Tibial artery (tissue), 4 donors: ENCODE measurements at regions of chr1 and their contacts with region 1.

Region 1: GRCh38 chr1:171226747-171227370 is 21.4 kb upstream of the FMO1 start:
- DNase-seq: no peak
- H3K4me3 ChIP-seq: no peak overlapping the region
- H3K27ac ChIP-seq: no peak overlapping the region
- H3K4me1 ChIP-seq: peaks cover 0 to 35% (median 20%) of the 10 kb centered on the region in 4 donors
- H3K27me3 ChIP-seq: no peaks in the 10 kb centered on the region
- CTCF ChIP-seq: peak; percentile 84 to 89

Region 2: DNA sequence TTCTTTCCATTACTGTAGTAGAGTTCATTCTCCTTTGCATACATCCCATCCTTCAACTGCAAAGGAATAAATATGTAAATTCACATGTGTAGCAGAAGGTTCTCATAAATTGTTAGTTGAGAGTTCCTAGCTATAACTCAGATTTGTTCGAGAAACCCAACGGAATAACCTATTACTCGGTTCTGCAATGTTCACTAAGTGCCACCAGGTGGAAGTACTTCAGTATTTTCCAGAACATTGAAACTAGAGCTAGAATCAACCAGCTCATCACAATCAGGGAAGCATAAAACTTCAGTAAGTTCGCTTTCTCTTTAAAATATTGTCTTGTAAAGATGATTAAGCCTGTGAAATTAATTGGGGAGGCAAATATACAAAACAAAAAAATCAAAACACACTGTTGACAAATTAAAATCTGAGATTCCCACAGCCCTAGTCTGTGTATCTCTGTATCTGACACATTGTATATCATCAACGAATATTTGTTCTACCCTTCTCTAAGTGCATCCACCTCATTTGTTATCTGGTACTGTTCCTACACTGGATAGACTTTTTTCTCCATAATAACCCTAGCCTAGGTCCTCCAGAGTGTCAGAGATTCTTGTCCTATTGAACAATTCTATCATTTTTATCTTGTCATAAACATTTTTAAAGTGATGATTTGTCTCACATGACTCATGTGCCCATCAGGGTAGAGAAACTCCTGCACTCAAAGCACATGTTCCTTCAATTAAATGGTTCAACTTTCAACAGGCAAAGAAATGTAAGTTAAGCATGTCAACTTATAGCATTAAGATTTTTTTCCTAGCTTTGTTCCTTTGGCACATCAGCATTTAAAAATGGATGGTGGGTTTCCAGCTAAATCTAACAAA is 259.6 kb before region 1 on chr1:
- intact Hi-C with region 1: loop called (anchors 5 kb)
- DNase-seq: no peak
- H3K4me3 ChIP-seq: no peak overlapping the region
- H3K27ac ChIP-seq: no peak overlapping the region
- H3K4me1 ChIP-seq: peaks cover 0 to 10% (median 1%) of the 10 kb centered on the region in 4 donors
- H3K27me3 ChIP-seq: no peaks in the 10 kb centered on the region
- CTCF ChIP-seq: peak; percentile 73 to 82

Region 3: GRCh38 chr1:171081314-171081753 is 145.5 kb before region 1 on chr1:
- intact Hi-C with region 1: loop called (anchors 5 kb)
- DNase-seq: no peak
- H3K4me3 ChIP-seq: no peak overlapping the region
- H3K27ac ChIP-seq: peak overlapping the region; percentile 61 to 68
- H3K4me1 ChIP-seq: peaks cover 0 to 16% (median 8%) of the 10 kb centered on the region in 4 donors
- H3K27me3 ChIP-seq: no peaks in the 10 kb centered on the region
- CTCF ChIP-seq: peak; percentile 47 to 67

Region 4: DNA sequence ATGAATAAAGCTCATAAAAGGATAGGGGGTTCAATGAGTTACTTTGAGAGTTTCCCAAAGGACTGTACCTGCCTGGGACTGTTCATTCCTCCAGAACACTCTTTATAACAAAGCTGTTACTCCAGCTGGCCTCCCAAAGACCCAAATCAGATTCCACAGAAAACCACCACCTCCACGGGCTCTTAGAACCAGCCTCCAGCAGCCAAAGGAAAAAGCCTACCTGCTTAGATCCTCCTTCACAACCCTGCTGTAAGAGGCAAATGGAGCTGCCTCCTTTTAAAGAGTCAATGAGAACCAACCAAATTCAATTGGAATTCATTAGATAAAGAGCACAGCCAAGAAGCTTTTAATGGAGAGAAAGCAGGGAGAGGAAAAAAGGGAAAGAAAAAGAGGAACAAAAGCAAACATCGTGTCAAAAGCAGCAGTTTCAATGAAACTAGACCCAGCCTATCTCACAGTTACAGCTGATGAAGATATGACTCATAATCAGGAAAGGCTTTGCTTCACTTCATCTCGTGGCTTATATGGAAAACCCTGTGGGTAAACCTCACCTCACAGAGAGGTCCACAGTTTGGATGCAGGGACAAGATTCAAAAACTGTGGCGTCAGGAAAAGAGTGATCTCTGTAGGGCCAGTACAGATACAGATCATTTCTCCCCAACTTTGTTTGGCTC is 59.3 kb after region 1 on chr1:
- intact Hi-C with region 1: no loop called
- DNase-seq: no peak
- H3K4me3 ChIP-seq: no peak overlapping the region
- H3K27ac ChIP-seq: no peak overlapping the region
- H3K4me1 ChIP-seq: no peaks in the 10 kb centered on the region
- H3K27me3 ChIP-seq: no peaks in the 10 kb centered on the region
- CTCF ChIP-seq: no peak